ENCODE measurements at regions of chr5 and their contacts with region 1.

Region 1: GRCh38 chr5:12023614-12024241 is 119.5 kb upstream of the CTNND2 start:
- H3K4me3 ChIP-seq: no peak overlapping the region
- H3K27ac ChIP-seq: no peak overlapping the region
- H3K4me1 ChIP-seq: no peaks in the 10 kb centered on the region
- CTCF ChIP-seq: no peak

Region 2: DNA sequence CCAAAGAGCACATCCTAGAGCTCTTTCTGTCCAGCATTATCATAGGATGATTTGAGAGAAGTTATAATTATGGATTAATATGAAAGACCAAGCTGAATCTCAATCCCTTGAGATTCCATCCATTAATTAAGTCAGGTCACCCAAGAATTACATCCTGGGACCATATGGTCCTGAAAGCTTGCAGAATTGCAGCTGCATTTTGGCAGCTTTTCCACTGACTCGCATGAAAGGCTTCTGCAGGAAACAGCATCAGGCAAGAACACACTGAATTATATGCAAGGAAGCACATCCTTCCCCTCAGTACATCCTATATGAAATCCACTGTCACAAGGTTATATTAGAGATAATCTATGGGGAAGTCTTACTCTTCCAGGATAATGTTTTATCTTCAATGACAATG is 10.4 kb before region 1 on chr5:
- CTCF ChIA-PET with region 1: interaction called, 11 read pairs
- POLR2A ChIA-PET with region 1: no interaction called
- H3K4me3 ChIP-seq: no peak overlapping the region
- H3K27ac ChIP-seq: no peak overlapping the region
- H3K4me1 ChIP-seq: no peaks in the 10 kb centered on the region
- CTCF ChIP-seq: no peak

Measured in HEK293 (cell line).